GM12878 (cell line): ENCODE measurements at regions of chr6 and their contacts with region 1.

Region 1: DNA sequence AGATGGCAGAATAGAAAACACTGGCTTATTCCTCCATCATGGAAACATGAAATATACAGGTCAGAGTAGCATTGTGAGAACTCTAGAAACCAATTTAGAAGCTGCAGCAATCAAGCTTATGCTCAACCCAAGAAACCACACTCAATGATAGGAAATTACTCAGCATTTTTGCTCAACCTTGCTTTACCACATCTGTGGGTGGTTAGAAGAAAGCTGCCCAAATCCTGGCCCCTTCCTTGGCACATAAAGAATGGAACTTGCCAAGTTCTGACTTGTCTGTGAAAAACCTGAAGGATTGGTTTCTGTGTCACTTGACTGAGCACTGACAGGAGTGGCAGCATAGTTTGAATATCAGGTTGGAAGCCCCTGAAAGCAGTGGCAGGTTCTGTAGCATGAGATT is 108.0 kb upstream of the MOCS1 start:
- DNase-seq: no peak
- ATAC-seq: peak; percentile 26; the same call in 1 of the 3 replicates
- H3K4me3 ChIP-seq: no peak overlapping the region
- H3K27ac ChIP-seq: no peak overlapping the region
- H3K4me1 ChIP-seq: no peaks in the 10 kb centered on the region
- H3K27me3 ChIP-seq: no peaks in the 10 kb centered on the region
- CTCF ChIP-seq: no peak
- EP300 ChIP-seq: no peak
- POLR2A ChIP-seq: no peak
- RAD21 ChIP-seq: no peak

Region 2: DNA sequence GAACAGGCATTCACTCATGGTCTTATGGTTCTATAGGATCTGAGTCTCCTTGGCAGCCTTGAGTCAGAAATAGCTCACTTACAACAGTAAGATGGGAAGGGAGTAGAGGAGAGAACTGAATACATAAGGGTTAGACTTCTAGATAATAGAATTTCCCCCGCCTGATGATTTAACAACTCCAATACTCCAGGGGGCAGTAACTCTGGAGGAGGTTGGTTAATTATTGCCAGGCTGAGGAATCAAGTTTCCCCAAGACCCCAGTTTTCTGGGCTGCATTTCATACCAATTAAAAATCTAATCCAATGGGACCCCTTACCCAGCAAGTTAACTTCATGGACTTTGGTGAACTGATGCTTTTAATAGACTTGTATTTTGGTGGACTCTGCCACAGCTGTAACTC is 13.8 kb before region 1 on chr6:
- CTCF ChIA-PET with region 1: interaction called, 3 read pairs
- POLR2A ChIA-PET with region 1: interaction called, 4 read pairs
- RAD21 ChIA-PET with region 1: no interaction called
- SMC1A ChIA-PET with region 1: interaction called, 10 read pairs
- in situ Hi-C with region 1: no loop called
- intact Hi-C with region 1: no loop called
- DNase-seq: no peak
- ATAC-seq: no peak
- H3K4me3 ChIP-seq: no peak overlapping the region
- H3K27ac ChIP-seq: no peak overlapping the region
- H3K4me1 ChIP-seq: no peaks in the 10 kb centered on the region
- H3K27me3 ChIP-seq: no peaks in the 10 kb centered on the region
- CTCF ChIP-seq: no peak
- EP300 ChIP-seq: no peak
- POLR2A ChIP-seq: no peak
- RAD21 ChIP-seq: no peak

Region 3: GRCh38 chr6:40054602-40055001 is 12.4 kb after region 1 on chr6:
- CTCF ChIA-PET with region 1: no interaction called
- POLR2A ChIA-PET with region 1: no interaction called
- RAD21 ChIA-PET with region 1: no interaction called
- SMC1A ChIA-PET with region 1: interaction called, 13 read pairs
- in situ Hi-C with region 1: no loop called
- intact Hi-C with region 1: no loop called
- DNase-seq: no peak
- ATAC-seq: no peak
- H3K4me3 ChIP-seq: no peak overlapping the region
- H3K27ac ChIP-seq: no peak overlapping the region
- H3K4me1 ChIP-seq: no peaks in the 10 kb centered on the region
- H3K27me3 ChIP-seq: no peaks in the 10 kb centered on the region
- CTCF ChIP-seq: no peak
- EP300 ChIP-seq: no peak
- POLR2A ChIP-seq: no peak
- RAD21 ChIP-seq: no peak